Activated CD4-positive, alpha-beta memory T cell treated with anti-CD3 and anti-CD28 coated beads for 36 hours (primary cell): ENCODE measurements at regions of chr5 and their contacts with region 1.

Region 1: DNA sequence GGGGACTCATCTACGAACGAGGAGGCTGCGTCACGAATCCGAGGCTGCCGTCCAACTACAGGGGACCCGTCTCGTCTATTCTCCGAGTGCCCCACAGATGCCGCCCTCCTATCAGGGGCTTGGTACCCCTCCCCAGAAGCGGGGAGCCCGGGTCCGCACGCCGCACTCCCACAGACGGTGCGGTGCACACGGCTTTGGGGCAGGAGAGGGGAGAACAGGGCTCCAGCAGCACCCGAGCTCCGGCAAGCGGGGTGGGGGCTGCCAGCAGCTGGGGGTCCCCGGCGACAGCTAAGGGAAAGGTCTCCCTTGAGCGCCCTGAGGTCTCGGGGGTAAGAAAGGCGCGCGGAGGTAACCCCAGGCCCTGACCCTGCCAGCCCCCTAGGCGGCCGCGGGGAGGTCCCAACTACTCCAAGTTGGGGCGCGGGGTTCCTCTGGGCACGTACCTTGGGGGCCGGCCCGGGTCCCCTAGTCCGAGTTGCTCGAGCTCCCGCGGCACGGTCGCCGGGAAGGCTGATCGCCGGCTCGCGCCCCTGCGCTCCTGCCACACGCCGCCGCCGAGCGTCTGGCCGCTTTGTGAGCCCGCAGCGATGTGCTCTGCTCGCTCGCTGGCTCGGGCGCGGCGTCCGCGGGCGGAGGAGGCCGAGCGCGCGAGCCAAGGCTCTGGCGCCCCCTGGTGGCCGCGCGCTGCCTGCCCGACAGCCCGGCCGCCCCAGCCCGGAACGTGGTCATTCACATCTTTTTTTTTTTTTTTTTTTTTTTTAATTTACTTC is at the start of gene SPOCK1:
- DNase-seq: peak; percentile 65
- H3K4me3 Mint-ChIP-seq: no peak within 1 kb of the TSS
- H3K27ac Mint-ChIP-seq: no peak within 1 kb of the TSS
- H3K4me1 Mint-ChIP-seq: no peaks in the 10 kb centered on the region
- H3K27me3 Mint-ChIP-seq: peaks cover 20% of the 10 kb centered on the region
- total RNA-seq, gene SPOCK1: not detected

Region 2: GRCh38 chr5:136979131-136979530 is 519.8 kb before region 1 on chr5:
- CTCF ChIA-PET with region 1: no interaction called
- POLR2A ChIA-PET with region 1: no interaction called
- intact Hi-C with region 1: no loop called
- DNase-seq: no peak
- H3K4me3 Mint-ChIP-seq: no peak overlapping the region
- H3K27ac Mint-ChIP-seq: no peak overlapping the region
- H3K4me1 Mint-ChIP-seq: no peaks in the 10 kb centered on the region
- H3K27me3 Mint-ChIP-seq: peaks cover 3% of the 10 kb centered on the region

Region 3: DNA sequence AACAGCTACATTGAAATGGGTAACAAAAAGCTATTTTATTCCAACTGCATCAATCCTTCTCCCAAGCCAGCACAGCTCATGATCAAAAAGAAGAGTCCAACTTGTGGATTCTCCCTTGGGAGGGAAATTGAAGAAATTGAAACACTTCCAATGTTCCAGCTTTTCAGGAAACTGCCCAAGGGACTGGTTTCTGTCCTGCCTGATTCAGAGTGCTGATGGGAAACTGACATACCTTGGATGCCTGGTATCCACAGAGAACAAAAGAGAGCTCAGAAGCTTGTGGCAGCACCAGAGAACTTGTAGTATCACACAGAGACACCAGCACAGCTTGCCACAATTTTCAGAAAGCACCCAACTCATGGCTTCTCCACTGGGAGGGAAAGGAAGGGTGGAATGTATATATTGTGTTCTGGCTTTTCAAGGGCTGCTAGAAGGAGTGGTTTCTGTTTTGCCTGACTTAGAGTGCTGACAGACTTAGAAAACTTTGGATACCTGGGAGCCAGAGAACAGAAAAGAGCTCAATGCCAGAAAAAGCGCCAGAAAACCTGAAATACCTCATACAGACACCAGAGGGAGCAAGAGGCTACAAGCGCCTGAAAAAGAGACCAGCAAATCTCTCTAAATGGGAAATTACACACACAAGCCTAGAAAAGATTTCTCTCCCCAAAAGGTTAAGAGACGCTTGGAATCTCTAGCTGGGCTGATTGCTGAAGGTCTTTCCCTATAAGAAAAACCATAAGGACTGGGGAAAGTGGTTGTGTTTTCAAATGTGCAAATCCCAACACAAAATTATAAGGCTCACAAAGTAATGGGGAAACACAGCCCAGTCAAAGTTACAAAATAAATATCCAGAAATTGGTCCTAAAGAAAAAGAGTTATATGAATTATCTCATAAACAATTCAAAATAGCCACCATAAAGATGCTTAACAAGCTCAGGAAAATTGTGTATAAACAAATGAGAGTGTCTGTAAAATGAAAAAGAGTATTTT is 178.6 kb before region 1 on chr5:
- CTCF ChIA-PET with region 1: interaction called, 33 read pairs
- POLR2A ChIA-PET with region 1: no interaction called
- intact Hi-C with region 1: no loop called
- DNase-seq: peak; percentile 12
- H3K4me3 Mint-ChIP-seq: no peak overlapping the region
- H3K27ac Mint-ChIP-seq: no peak overlapping the region
- H3K4me1 Mint-ChIP-seq: no peaks in the 10 kb centered on the region
- H3K27me3 Mint-ChIP-seq: peaks cover 15% of the 10 kb centered on the region

Region 4: DNA sequence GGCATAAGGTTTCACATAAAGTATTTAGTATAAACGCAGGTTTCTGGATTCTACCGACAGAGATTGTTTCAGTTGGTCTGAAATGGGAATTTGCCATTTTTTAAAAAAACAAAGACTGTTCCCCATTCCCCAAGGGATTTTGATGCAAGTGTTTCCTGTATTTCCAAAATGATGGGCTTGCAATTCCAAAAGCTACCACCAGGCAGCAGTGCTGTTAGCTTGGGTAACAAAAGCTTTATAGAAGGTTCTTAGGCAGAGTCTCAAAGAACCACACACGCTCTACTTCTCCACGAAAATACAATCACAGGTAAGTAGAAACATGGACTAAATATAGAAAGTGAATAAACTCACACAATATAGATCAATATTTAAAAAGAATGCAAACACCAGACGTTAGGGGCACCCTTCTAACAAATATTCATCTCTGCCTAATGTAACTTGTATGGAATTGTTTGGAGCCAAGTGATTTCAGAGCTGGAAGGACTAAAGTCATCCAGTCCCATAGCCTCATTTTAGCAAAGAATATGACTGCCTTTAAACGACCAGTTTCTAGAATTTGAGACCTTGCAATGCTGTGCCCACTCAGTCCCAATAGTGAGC is 154.1 kb before region 1 on chr5:
- CTCF ChIA-PET with region 1: interaction called, 4 read pairs
- POLR2A ChIA-PET with region 1: no interaction called
- intact Hi-C with region 1: loop called (anchors 5 kb)
- DNase-seq: peak; percentile 24
- H3K4me3 Mint-ChIP-seq: no peak overlapping the region
- H3K27ac Mint-ChIP-seq: no peak overlapping the region
- H3K4me1 Mint-ChIP-seq: no peaks in the 10 kb centered on the region
- H3K27me3 Mint-ChIP-seq: peaks cover 3% of the 10 kb centered on the region